Endothelial cell of umbilical vein (primary cell): ENCODE measurements at regions of chrX and their contacts with region 1.

Region 1: GRCh38 chrX:38327007-38327774 is at the start of gene RPGR:
- DNase-seq: peak; percentile 93
- H3K4me3 ChIP-seq: peak within 1 kb of the TSS; percentile 61 to 93 (median 66)
- H3K27ac ChIP-seq: peak within 1 kb of the TSS; percentile 97
- H3K4me1 ChIP-seq: peaks cover 31% of the 10 kb centered on the region
- H3K27me3 ChIP-seq: no peaks in the 10 kb centered on the region
- CTCF ChIP-seq: peak; percentile 79 to 89
- POLR2A ChIP-seq: peak; percentile 44
- total RNA-seq, gene RPGR: 21.1 and 24.0 TPM in 2 replicates

Region 2: DNA sequence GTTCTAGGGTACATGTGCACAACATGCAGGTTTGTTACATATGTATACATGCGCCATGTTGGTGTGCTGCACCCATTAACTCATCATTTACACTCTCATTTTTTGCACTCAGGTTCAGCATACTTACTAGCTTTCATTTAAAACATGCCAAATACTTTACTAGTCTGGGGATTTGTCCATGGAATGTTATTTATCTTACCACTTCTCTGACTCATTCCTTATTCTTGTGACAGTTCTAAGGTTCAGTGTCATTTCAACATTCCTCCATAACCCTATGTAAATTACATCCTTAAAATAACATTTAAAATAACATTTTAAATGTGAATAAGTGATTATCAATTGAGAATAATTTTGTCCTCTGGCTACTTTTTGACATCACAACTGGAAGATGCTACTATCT is 340.3 kb before region 1 on chrX:
- CTCF ChIA-PET with region 1: no interaction called
- POLR2A ChIA-PET with region 1: no interaction called
- dilution Hi-C with region 1: no loop called
- intact Hi-C with region 1: no loop called
- DNase-seq: peak; percentile 1
- H3K4me3 ChIP-seq: no peak overlapping the region
- H3K27ac ChIP-seq: peak overlapping the region; percentile 18
- H3K4me1 ChIP-seq: peaks cover 19% of the 10 kb centered on the region
- H3K27me3 ChIP-seq: no peaks in the 10 kb centered on the region
- CTCF ChIP-seq: no peak
- POLR2A ChIP-seq: no peak

Region 3: GRCh38 chrX:38192007-38192810 is 135.0 kb before region 1 on chrX:
- CTCF ChIA-PET with region 1: interaction called, 12 read pairs
- POLR2A ChIA-PET with region 1: no interaction called
- dilution Hi-C with region 1: no loop called
- intact Hi-C with region 1: loop called (anchors 1 kb)
- DNase-seq: peak; percentile 29
- H3K4me3 ChIP-seq: no peak overlapping the region
- H3K27ac ChIP-seq: no peak overlapping the region
- H3K4me1 ChIP-seq: no peaks in the 10 kb centered on the region
- H3K27me3 ChIP-seq: no peaks in the 10 kb centered on the region
- CTCF ChIP-seq: peak; percentile 30 to 36
- POLR2A ChIP-seq: no peak

Region 4: GRCh38 chrX:38211891-38212635 is 115.1 kb before region 1 on chrX:
- CTCF ChIA-PET with region 1: interaction called, 3 read pairs
- POLR2A ChIA-PET with region 1: interaction called, 6 read pairs
- dilution Hi-C with region 1: no loop called
- intact Hi-C with region 1: loop called (anchors 1 kb)
- DNase-seq: peak; percentile 87
- H3K4me3 ChIP-seq: peak overlapping the region in 1 of 3 experiments; percentile 46
- H3K27ac ChIP-seq: peak overlapping the region; percentile 75
- H3K4me1 ChIP-seq: peaks cover 57% of the 10 kb centered on the region
- H3K27me3 ChIP-seq: no peaks in the 10 kb centered on the region
- CTCF ChIP-seq: no peak
- POLR2A ChIP-seq: peak; percentile 17

Region 5: DNA sequence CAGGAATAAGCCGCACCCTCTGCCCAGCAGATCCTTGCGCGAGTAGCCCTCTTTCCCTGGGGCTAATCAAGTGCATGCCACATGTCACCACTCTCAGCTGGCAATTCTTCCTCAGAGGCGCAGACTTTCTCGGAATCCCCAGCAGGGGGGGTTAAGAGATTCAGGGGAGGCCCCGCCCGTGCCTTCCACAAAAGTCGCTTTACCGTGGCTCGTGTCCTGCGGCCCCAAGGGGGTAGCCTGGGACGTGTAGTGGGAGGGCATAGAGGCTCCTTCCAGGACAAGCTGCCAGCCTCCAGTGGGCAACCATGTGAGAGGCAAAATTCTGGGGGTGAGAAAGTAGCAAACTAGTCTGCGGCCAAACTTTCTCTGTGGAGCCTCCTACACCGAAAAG is 107.2 kb before region 1 on chrX:
- CTCF ChIA-PET with region 1: interaction called, 14 read pairs
- POLR2A ChIA-PET with region 1: interaction called, 6 read pairs
- dilution Hi-C with region 1: no loop called
- intact Hi-C with region 1: loop called (anchors 1 kb)
- DNase-seq: peak; percentile 58
- H3K4me3 ChIP-seq: peak overlapping the region; percentile 28 to 63 (median 57)
- H3K27ac ChIP-seq: peak overlapping the region; percentile 5
- H3K4me1 ChIP-seq: peaks cover 18% of the 10 kb centered on the region
- H3K27me3 ChIP-seq: no peaks in the 10 kb centered on the region
- CTCF ChIP-seq: peak; percentile 14 to 47
- POLR2A ChIP-seq: no peak

Region 6: GRCh38 chrX:38260231-38260630 is 67.0 kb before region 1 on chrX:
- CTCF ChIA-PET with region 1: interaction called, 7 read pairs
- POLR2A ChIA-PET with region 1: no interaction called
- dilution Hi-C with region 1: no loop called
- intact Hi-C with region 1: loop called (anchors 1 kb)
- DNase-seq: peak; percentile 35
- H3K4me3 ChIP-seq: no peak overlapping the region
- H3K27ac ChIP-seq: no peak overlapping the region
- H3K4me1 ChIP-seq: no peaks in the 10 kb centered on the region
- H3K27me3 ChIP-seq: no peaks in the 10 kb centered on the region
- CTCF ChIP-seq: peak; percentile 15 to 31
- POLR2A ChIP-seq: no peak

Region 7: GRCh38 chrX:38282044-38282443 is 45.1 kb before region 1 on chrX:
- CTCF ChIA-PET with region 1: interaction called, 12 read pairs
- POLR2A ChIA-PET with region 1: no interaction called
- dilution Hi-C with region 1: no loop called
- intact Hi-C with region 1: no loop called
- DNase-seq: peak; percentile 8
- H3K4me3 ChIP-seq: no peak overlapping the region
- H3K27ac ChIP-seq: no peak overlapping the region
- H3K4me1 ChIP-seq: peaks cover 3% of the 10 kb centered on the region
- H3K27me3 ChIP-seq: no peaks in the 10 kb centered on the region
- CTCF ChIP-seq: peak; percentile 5 to 42
- POLR2A ChIP-seq: no peak

Region 8: GRCh38 chrX:38304010-38304409 is 23.2 kb before region 1 on chrX:
- CTCF ChIA-PET with region 1: interaction called, 100 read pairs
- POLR2A ChIA-PET with region 1: interaction called, 10 read pairs
- dilution Hi-C with region 1: no loop called
- intact Hi-C with region 1: loop called (anchors 1 kb)
- DNase-seq: peak; percentile 60
- H3K4me3 ChIP-seq: no peak overlapping the region
- H3K27ac ChIP-seq: peak overlapping the region; percentile 87
- H3K4me1 ChIP-seq: peaks cover 31% of the 10 kb centered on the region
- H3K27me3 ChIP-seq: no peaks in the 10 kb centered on the region
- CTCF ChIP-seq: peak; percentile 24 to 36
- POLR2A ChIP-seq: no peak